Activated CD4-positive, alpha-beta T cell treated with anti-CD3 and anti-CD28 coated beads, Interleukin-2, amount 10 ng/mL, durations not matched to agents 7 days and 5 days (primary cell): ENCODE measurements at regions of chr10 and their contacts with region 1.

Region 1: GRCh38 chr10:73772280-73773151 is 9.3 kb upstream of the CHCHD1 start:
- DNase-seq: peak; percentile 79
- H3K4me3 Mint-ChIP-seq: peak overlapping the region; percentile 95
- H3K27ac Mint-ChIP-seq: peak overlapping the region; percentile 94
- H3K4me1 Mint-ChIP-seq: peaks cover 69% of the 10 kb centered on the region
- H3K27me3 Mint-ChIP-seq: no peaks in the 10 kb centered on the region

Region 2: DNA sequence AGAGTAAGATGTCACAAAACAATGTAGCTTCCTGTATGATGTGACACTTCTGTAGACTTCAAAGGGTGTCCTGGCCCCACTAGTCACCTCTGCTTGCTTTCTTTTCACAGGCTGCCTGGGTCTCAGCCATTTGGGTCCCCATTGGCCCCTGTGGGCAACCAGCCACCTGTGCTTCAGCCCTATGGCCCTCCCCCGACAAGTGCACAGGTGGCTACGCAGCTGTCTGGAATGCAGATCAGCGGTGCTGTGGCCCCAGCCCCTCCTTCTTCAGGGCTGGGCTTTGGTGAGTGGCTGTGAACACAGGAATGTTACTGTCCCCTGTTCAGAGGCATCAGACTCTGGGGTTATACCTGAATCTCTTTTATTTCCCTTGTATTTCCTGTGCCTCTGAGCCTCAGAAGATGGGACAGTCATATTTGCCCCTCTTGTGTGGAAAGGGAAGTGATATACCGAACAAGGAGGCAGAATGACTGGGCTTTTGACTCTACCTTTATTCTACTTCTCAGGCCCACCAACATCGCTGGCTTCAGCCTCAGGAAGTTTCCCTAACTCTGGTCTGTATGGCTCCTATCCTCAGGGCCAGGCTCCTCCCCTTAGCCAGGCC is 12.9 kb before region 1 on chr10:
- CTCF ChIA-PET with region 1: interaction called, 103 read pairs
- POLR2A ChIA-PET with region 1: interaction called, 5 read pairs
- DNase-seq: peak; percentile 48
- H3K4me3 Mint-ChIP-seq: no peak overlapping the region
- H3K27ac Mint-ChIP-seq: peak overlapping the region; percentile 83
- H3K4me1 Mint-ChIP-seq: peaks cover 55% of the 10 kb centered on the region
- H3K27me3 Mint-ChIP-seq: no peaks in the 10 kb centered on the region

Region 3: GRCh38 chr10:73785221-73785720 is 12.8 kb after region 1 on chr10 and contains the start of gene ZSWIM8:
- CTCF ChIA-PET with region 1: interaction called, 103 read pairs
- POLR2A ChIA-PET with region 1: interaction called, 9 read pairs
- DNase-seq: peak; percentile 89
- H3K4me3 Mint-ChIP-seq: peak within 1 kb of the TSS; percentile 82
- H3K27ac Mint-ChIP-seq: peak within 1 kb of the TSS; percentile 98
- H3K4me1 Mint-ChIP-seq: peaks cover 55% of the 10 kb centered on the region
- H3K27me3 Mint-ChIP-seq: no peaks in the 10 kb centered on the region
- total RNA-seq, gene ZSWIM8: 79.2 to 87.3 TPM